GM10248 (cell line): ENCODE measurements at regions of chr12 and their contacts with region 1.

Region 1: GRCh38 chr12:16857456-16857923 is 251.5 kb upstream of the LMO3 start:
- DNase-seq: peak; percentile 47
- CTCF ChIP-seq: no peak

Region 2: GRCh38 chr12:16870845-16871244 is 13.4 kb after region 1 on chr12:
- CTCF ChIA-PET with region 1: interaction called, 19 read pairs
- POLR2A ChIA-PET with region 1: no interaction called
- DNase-seq: no peak
- CTCF ChIP-seq: no peak